Activated CD4-positive, alpha-beta T cell treated with anti-CD3 and anti-CD28 coated beads for 36 hours (primary cell): ENCODE measurements at regions of chr4 and their contacts with region 1.

Region 1: DNA sequence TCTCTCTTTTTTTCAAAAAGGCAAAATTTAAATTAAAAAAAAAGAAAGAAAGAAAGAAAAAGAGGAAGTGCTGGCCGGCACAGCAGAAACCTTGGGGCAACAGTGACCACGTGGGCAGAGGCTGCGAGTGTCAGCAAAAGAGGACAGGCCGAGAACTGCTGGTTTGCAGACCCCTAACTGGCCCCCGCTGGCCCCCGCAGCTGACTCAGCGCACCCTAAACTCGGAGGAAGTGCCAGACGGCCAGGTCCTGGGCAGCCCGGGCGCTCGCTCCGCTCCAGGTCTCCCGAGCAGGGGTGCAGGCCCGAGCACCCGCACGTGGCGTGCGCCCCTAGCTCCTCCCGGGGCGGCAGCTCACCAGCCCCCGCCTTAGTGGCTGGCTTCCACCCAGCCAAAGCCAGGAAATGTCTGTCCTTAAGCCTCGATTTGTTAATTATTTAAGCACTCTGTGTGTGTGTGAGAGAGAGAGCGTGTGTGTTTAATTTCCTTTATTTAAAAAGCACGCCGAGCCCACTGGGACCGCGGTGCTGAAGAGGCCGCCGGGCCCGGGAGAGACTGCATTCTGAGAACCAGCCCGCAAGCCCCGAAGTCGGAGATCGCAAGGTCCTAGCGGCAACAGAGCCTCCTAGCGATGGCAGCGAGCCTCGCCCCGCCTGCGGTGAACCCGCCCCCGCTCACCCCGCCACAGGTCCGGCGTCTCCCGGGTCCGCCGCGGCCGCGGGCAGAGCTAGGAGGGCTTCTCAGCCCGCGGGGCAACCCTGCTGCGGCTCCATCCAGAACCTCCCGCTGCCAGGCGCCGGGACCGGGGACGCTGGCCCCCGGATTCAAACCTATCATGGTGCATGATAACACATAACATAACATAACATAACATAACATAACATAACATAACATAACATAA is 46.0 kb upstream of the CDKN2AIP start:
- DNase-seq: peak; percentile 83
- ATAC-seq: peak; percentile 84
- H3K4me3 Mint-ChIP-seq: peak overlapping the region; percentile 69
- H3K27ac Mint-ChIP-seq: peak overlapping the region; percentile 90
- H3K4me1 Mint-ChIP-seq: peaks cover 30% of the 10 kb centered on the region
- H3K27me3 Mint-ChIP-seq: peaks cover 5% of the 10 kb centered on the region

Region 2: DNA sequence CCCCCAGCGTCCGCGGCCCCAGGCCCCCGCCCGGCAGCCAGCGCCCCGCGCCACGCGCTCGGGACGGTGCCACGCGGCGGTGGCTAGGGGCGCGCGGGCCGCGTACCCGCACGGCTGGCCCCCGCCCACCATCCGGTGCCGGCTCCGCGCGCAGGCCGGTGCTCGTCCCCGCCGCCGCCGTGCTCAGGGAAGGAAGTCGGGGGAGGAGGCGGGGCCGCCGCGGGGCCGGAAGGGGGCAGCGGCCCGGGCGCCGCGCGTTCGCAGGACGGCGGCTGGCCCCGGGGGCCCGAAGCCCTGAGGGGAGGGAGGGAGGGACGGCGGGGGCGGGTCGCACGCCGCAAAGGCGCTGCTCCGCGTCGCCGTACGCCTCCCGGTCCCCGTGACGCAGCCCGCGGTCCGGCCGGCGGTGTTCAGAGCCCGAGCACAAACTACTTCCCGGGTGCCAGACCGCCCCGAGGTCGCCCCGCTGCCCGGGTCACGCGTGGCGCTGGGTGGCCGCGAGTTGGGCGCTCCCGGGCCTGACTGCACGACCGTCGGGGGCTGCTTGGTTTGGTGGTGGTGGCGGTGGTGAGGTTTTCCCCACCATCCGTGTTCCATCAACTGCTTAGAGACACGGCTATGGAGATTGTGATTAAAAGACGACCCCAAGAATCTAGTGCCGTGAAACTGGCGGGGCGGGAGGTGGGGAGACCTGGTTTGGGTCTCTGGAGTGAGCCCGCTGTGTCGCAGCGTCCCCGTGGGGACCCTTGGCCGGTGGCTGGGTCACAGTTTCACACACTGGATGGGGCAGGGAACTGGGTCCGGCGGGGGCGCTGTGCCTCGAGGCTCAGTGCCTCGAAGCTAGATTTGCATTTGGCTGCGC is 481.1 kb before region 1 on chr4 and contains the start of gene DCTD:
- CTCF ChIA-PET with region 1: no interaction called
- POLR2A ChIA-PET with region 1: interaction called, 3 read pairs
- intact Hi-C with region 1: loop called in 1 of 2 experiments (anchors 5 kb)
- DNase-seq: peak; percentile 89
- ATAC-seq: peak; percentile 69
- H3K4me3 Mint-ChIP-seq: peak within 1 kb of the TSS; percentile 79
- H3K27ac Mint-ChIP-seq: peak within 1 kb of the TSS; percentile 95
- H3K4me1 Mint-ChIP-seq: peaks cover 48% of the 10 kb centered on the region
- H3K27me3 Mint-ChIP-seq: no peaks in the 10 kb centered on the region
- total RNA-seq, gene DCTD: 119 to 128 TPM

Region 3: DNA sequence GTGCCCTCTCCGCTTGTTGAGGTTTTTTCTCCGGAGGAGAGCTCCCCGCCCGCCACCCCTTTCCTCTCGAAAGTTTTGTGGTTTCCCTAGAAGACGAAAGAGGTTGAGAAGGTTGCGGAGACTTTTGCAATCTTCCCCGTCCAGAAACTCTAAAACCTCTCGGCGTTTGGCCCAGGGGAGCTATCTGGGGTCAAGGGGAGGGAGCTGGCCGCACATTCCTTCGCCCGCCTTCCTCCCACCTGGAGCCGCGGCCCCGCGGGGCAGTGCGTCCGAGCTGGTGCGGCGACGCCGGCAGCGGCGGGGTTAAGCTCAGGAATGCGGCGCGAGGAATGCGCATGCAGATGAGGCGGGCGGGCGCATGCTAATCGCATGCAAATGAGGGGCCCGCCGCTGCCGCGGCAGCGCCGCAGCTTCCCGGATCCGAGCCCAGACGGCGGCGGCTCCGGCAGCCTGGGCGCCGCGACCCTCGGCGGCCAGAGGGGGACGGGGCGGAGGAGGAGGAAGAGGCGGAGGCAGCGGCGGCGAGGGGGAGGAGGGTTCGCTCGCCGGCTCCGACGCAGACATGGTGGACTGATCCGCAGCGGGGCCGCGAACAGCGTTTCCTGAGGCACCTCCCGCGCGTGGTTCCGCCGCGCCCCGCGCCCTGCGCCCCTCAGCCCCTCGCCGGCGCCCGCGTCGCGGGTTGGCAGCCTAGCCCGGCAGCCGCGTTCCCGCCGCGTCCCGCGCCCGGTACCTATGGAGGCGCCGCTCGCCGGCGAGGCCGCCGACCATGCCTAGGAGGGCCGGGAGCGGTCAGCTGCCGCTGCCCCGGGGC is 299.5 kb before region 1 on chr4 and contains the start of gene WWC2:
- CTCF ChIA-PET with region 1: no interaction called
- POLR2A ChIA-PET with region 1: no interaction called
- intact Hi-C with region 1: loop called in 1 of 2 experiments (anchors 5 kb)
- DNase-seq: peak; percentile 75
- ATAC-seq: peak; percentile 75
- H3K4me3 Mint-ChIP-seq: peak within 1 kb of the TSS; percentile 59
- H3K27ac Mint-ChIP-seq: no peak within 1 kb of the TSS
- H3K4me1 Mint-ChIP-seq: peaks cover 5% of the 10 kb centered on the region
- H3K27me3 Mint-ChIP-seq: peaks cover 33% of the 10 kb centered on the region
- total RNA-seq, gene WWC2: 3.6 to 4.3 TPM

Region 4: GRCh38 chr4:183287677-183288076 is 110.8 kb before region 1 on chr4:
- CTCF ChIA-PET with region 1: interaction called, 3 read pairs
- POLR2A ChIA-PET with region 1: no interaction called
- intact Hi-C with region 1: loop called in 1 of 2 experiments (anchors 2 kb)
- DNase-seq: no peak
- ATAC-seq: no peak
- H3K4me3 Mint-ChIP-seq: no peak overlapping the region
- H3K27ac Mint-ChIP-seq: no peak overlapping the region
- H3K4me1 Mint-ChIP-seq: no peaks in the 10 kb centered on the region
- H3K27me3 Mint-ChIP-seq: no peaks in the 10 kb centered on the region

Region 5: GRCh38 chr4:183348706-183349659 is 49.5 kb before region 1 on chr4:
- CTCF ChIA-PET with region 1: no interaction called
- POLR2A ChIA-PET with region 1: no interaction called
- intact Hi-C with region 1: loop called in 1 of 2 experiments (anchors 5 kb)
- DNase-seq: peak; percentile 67
- ATAC-seq: peak; percentile 95
- H3K4me3 Mint-ChIP-seq: no peak overlapping the region
- H3K27ac Mint-ChIP-seq: peak overlapping the region; percentile 37
- H3K4me1 Mint-ChIP-seq: peaks cover 17% of the 10 kb centered on the region
- H3K27me3 Mint-ChIP-seq: peaks cover 20% of the 10 kb centered on the region